Right ventricle myocardium superior (tissue), 1 donor: ENCODE measurements at regions of chr6 and their contacts with region 1.

Region 1: GRCh38 chr6:150016324-150017185 is 8.8 kb downstream of the RAET1L start:
- DNase-seq: peak; percentile 60
- ATAC-seq: peak; percentile 89

Region 2: GRCh38 chr6:149834513-149835481 is 181.8 kb before region 1 on chr6:
- intact Hi-C with region 1: loop called (anchors 5 kb)
- DNase-seq: no peak
- ATAC-seq: peak; percentile 60

Region 3: DNA sequence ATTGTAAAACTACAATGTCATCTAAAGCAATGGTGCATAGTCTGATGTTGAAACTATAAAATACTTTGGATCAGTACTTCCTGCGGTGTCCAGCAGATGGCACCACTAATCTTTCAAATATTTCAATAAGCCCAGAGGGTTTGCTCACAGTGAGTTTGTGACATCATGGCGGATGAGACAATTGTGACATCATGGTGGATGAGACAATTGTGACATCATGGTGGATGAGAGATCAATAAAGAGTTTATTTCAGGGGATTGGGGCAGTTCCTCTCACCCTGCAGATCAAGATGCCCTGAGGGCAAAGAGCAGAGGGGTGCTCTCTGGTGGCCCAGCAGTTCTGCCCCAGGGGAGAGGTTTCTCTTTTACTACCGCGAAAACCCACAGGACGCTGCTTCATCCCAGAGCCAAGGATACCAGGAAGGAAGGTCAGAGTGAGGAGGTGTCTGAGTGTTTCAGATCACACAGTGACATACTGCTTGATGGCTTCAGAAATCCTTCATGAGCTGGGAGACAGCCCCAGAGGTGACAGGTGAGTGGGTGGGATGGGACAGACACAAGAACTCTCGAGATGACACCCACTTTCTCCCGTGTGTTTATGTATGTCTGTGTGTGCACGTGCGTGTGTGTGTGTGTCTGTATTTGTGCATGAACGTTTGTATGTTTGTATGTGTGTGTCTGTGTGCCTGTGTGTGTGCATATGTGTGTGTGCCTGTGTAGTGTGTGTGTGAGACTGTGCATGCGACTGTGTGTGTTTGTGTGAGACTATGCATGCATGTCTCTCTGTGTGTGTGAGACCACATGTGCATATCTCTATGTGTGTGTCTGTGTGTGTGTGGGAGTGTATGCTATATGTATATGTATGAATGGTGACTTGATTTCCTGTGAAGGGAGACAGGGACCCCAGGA is 82.1 kb before region 1 on chr6:
- intact Hi-C with region 1: loop called (anchors 2 kb)
- DNase-seq: no peak
- ATAC-seq: peak; percentile 84